Panc1 (cell line): ENCODE measurements at regions of chr17 and their contacts with region 1.

Region 1: GRCh38 chr17:72171703-72172667 is 51.2 kb downstream of the SOX9 start:
- DNase-seq: no peak
- ATAC-seq: 0 out of 2 replicates have a peak, but pooled peaks have one; percentile 36
- H3K4me3 ChIP-seq: no peak overlapping the region
- H3K27ac ChIP-seq: 0 out of 2 replicates have a peak overlapping the region, but pooled peaks have one; percentile 62
- H3K4me1 ChIP-seq: peaks cover 23% of the 10 kb centered on the region
- H3K27me3 ChIP-seq: no peaks in the 10 kb centered on the region
- CTCF ChIP-seq: no peak

Region 2: GRCh38 chr17:70254735-70255460 is 1917.1 kb before region 1 on chr17:
- CTCF ChIA-PET with region 1: no interaction called
- POLR2A ChIA-PET with region 1: interaction called, 11 read pairs
- in situ Hi-C with region 1: no loop called
- intact Hi-C with region 1: no loop called
- DNase-seq: no peak
- ATAC-seq: no peak
- H3K4me3 ChIP-seq: no peak overlapping the region
- H3K27ac ChIP-seq: no peak overlapping the region
- H3K4me1 ChIP-seq: no peaks in the 10 kb centered on the region
- H3K27me3 ChIP-seq: peaks cover 2% of the 10 kb centered on the region; the same call in 1 of the 2 replicates
- CTCF ChIP-seq: no peak